H1 (cell line): ENCODE measurements at regions of chr22 and their contacts with region 1.

Region 1: GRCh38 chr22:39997939-39998338 is 3.2 kb downstream of the FAM83F start:
- DNase-seq: peak in 1 of 2 experiments; percentile 59
- H3K4me3 ChIP-seq: peak overlapping the region in 3 of 4 experiments; percentile 7 to 30 (median 17); a peak in 4 of 8 replicates
- H3K27ac ChIP-seq: peak overlapping the region; percentile 2; the same call in 1 of the 2 replicates
- H3K4me1 ChIP-seq: peaks cover 26 to 59% (median 46%) of the 10 kb centered on the region in 4 experiments
- H3K27me3 ChIP-seq: peaks cover 0 to 19% (median 13%) of the 10 kb centered on the region in 4 experiments; a peak in 6 of 7 replicates
- CTCF ChIP-seq: no peak
- EP300 ChIP-seq: no peak
- POLR2A ChIP-seq: no peak
- RAD21 ChIP-seq: no peak

Region 2: GRCh38 chr22:40009292-40009769 is 11.4 kb after region 1 on chr22:
- CTCF ChIA-PET with region 1: interaction called, 7 read pairs
- POLR2A ChIA-PET with region 1: interaction called, 44 read pairs
- DNase-seq: peak in 1 of 2 experiments; percentile 74
- H3K4me3 ChIP-seq: peak overlapping the region in 2 of 4 experiments; percentile 12 to 17; a peak in 3 of 8 replicates
- H3K27ac ChIP-seq: no peak overlapping the region
- H3K4me1 ChIP-seq: peaks cover 14 to 25% (median 18%) of the 10 kb centered on the region in 4 experiments
- H3K27me3 ChIP-seq: no peaks in the 10 kb centered on the region
- CTCF ChIP-seq: no peak
- EP300 ChIP-seq: no peak
- POLR2A ChIP-seq: no peak
- RAD21 ChIP-seq: no peak

Region 3: GRCh38 chr22:40067639-40068038 is 69.7 kb after region 1 on chr22:
- CTCF ChIA-PET with region 1: no interaction called
- POLR2A ChIA-PET with region 1: no interaction called
- DNase-seq: no peak
- H3K4me3 ChIP-seq: no peak overlapping the region
- H3K27ac ChIP-seq: no peak overlapping the region
- H3K4me1 ChIP-seq: no peaks in the 10 kb centered on the region
- H3K27me3 ChIP-seq: no peaks in the 10 kb centered on the region
- CTCF ChIP-seq: no peak
- EP300 ChIP-seq: no peak
- POLR2A ChIP-seq: no peak
- RAD21 ChIP-seq: no peak

Region 4: DNA sequence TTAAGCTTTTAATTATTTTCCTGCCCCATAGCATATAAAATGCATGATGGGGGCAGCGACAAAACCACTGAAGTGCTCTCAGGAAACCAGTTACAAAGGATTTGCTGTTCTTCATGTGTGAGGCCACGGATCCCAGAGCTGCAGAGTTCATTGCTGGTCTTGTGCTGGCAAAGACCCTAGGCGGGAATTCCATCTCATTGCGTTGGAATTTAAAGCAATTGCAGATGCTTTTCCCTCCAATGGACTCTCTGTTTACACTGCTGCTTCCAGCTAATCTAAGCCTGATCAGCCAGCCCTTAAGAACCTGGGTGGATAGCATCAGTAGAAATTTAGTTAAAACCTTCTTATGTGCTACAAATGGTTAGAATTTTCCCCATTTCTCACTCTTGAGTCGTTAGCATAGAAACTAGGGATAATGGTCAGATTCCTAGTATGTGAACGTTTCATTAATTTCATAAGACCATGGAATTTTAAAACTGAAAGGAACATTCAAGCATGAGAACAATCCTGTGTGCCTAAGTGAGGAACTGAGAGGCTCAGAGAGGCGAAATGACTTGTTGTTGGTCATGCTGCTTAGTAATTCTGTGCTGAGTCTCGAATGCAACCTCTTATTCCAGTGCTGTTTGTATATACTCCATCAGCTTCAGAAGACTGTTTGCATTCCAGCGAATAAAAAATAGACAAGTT is 312.3 kb after region 1 on chr22:
- CTCF ChIA-PET with region 1: no interaction called
- POLR2A ChIA-PET with region 1: no interaction called
- DNase-seq: no peak
- H3K4me3 ChIP-seq: no peak overlapping the region
- H3K27ac ChIP-seq: no peak overlapping the region
- H3K4me1 ChIP-seq: no peaks in the 10 kb centered on the region
- H3K27me3 ChIP-seq: no peaks in the 10 kb centered on the region
- CTCF ChIP-seq: no peak
- EP300 ChIP-seq: no peak
- POLR2A ChIP-seq: no peak
- RAD21 ChIP-seq: no peak